ENCODE measurements at regions of chr22 and their contacts with region 1.

Region 1: DNA sequence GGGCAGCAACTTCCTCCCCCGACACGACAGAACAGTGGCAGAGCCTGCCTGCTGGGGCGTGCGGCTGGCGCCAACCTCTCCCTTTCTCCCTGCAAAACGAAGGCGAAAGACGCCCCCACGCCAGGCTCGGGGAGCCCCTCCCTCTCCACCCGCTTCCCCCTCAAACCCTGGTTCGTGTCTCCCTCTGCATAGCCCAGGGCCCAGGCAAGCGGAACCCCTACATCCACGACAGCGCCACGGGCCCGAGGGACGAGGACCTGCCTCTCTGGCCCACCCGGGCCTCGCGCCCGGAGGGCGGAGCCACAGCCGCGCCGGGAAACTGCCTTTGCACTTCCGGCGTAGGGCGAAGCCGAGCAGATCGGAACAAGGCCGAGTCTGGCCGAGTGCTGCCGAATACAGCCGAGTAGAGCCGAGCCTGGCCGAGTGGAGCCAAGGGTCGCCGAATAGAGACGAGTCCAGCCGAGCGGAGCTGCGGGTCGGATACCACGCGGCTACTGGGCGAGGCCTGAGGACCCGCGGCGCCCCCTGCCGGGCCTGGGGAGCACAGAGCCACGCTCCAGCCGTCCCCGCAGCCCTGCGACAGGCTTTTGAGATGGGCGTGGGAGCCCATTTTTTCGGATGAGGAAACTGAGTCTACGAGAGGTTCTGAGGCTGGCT is 11.2 kb upstream of the C1QTNF6 start:
- DNase-seq: peak; percentile 99
- ATAC-seq: peak; percentile 95

Region 2: DNA sequence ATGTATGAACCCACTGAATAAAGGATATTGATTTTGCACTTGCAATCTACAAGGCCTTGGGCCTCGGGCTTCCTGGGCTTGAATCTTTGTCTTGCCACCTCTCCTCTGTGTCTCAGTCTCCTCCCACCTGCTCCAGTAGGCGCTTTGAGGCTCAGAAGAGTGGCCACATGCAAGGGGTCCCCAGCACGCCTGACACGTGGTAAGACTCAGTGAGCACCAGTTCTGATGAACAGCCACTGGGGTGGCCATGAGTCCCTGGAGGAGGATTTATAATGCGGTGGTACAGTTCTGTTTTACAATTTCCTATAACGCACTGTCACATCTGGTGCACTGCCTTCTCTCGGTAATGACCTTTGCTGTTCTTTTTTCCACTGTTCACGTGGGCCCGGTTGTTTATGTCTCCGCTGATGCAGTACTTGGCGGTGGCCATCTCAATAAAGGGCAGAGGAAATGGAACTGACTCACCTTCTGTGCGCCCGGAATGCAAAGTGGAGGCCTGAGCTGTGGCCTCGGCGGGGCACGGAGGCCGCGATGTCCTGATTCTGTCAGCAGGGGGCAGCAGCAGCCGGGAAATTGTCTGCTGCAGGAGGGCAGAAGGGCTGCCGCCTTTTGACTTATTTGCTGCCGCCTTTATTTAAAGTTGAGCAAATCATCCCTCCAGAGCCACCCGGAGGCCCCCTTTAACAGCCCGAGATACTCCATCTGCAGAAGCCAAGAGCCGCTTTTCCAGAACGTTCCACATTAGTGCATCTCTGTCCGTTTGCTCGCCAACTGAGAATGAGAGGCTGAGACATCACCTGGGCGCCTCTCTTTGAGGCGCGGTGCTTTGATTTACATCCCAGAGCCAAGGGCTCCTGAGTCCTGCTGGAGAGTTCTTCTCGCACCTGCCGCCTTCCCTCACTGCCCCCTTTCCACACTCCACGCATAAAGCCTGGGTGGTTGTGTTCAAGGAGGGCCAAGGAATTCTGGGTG is 417.3 kb before region 1 on chr22:
- intact Hi-C with region 1: loop called (anchors 5 kb)
- DNase-seq: peak; percentile 87
- ATAC-seq: peak; percentile 85

Region 3: DNA sequence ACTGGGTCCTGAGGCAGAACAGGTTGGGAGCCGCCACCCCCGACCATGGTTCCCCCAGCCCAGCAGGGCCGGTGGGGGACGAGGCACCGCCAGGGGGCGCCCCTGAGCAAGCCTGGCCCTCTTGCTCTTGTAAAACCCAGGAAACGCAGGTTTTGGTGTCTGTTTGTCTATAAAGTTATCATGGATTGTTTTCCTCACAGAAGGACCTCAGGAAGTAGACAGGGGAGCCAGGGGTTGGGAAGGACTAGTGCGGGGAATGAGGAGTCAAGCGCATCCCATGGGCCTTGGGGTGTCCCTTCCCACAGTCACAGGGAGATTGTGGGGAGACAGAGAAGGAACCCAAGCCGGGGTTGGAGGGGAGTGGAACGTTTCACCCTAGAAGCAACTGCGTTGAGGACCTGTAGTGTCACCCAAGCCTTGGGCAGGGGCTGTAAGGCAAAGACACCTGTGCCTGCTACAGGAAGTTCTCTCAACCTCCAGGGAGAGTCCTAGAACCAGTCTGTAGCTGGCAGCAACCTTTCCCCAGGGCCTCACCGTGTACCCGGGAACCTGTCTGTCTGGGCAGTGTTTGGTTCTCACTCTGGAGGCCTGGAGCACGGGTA is 121.2 kb before region 1 on chr22:
- intact Hi-C with region 1: loop called (anchors 2 kb)
- DNase-seq: no peak
- ATAC-seq: no peak

Region 4: DNA sequence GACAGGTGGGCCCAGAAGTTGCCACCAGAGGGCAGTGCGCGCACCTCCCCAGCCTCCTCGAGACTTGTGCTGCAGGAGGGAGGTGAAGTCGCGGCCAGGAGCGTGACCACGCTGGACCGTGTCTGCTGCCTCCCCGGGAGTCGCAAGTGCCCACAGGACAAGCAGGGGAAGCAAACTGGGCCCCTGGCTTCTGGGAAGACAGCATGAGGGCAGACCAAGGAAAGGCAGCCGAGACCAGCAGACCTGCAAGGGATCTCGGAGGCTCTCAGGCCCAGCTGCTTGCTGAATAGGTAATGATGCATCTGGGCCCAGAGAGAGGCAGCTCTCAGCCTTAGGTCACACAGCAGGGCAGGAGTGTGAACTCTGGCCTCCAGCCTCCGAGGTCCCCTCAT is 32.6 kb before region 1 on chr22:
- intact Hi-C with region 1: loop called (anchors 1 kb)
- DNase-seq: peak; percentile 93
- ATAC-seq: peak; percentile 87

Region 5: DNA sequence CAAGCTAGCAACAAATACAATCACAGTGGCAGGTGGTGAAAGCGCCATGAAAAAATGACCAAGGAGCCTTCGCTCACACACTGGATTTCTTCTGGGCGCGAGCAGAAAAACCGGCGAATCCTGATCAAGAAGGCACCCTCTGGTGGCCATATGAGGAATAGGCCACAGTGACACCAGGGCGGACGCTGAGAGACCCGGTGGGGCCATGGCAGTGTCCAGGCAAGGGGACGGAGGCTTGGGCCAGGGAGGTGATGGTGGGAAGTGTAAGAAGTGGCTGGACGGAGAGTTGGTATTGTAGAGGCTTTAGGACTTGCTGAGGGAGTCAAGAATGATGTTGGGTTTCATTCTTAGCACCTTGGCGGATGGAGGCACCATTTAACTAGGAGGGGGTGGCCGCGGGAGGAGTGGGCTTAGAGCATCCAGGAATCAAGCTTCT is 61.7 kb after region 1 on chr22:
- intact Hi-C with region 1: no loop called
- DNase-seq: peak; percentile 80
- ATAC-seq: peak; percentile 67

Region 6: GRCh38 chr22:37330200-37331033 is 131.2 kb after region 1 on chr22:
- intact Hi-C with region 1: no loop called
- DNase-seq: peak; percentile 23
- ATAC-seq: no peak